Activated B cell treated with CpG ODN at 0.5 μM for 24 hours (primary cell): ENCODE measurements at regions of chr2 and their contacts with region 1.

Region 1: DNA sequence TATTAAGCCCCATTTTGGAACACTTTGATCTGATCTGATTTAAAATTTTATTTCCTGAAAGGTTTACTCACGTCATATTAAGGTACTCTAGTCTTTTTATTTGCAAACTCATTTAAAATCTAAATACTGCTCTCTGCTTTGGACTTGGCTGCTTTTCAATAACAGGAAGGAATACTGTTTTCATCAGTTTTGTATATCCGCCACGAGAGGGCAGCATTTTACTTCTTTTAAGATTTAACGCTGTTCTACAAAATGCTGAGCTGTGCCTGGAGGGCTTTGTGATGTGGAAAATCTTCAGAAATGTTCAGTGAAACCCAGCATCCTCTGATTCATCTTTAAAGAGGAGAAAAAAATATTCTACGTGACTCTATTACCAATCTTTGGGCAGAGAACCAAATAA is 37.5 kb upstream of the SLC38A11 start:
- DNase-seq: no peak
- ATAC-seq: peak; percentile 58
- H3K4me3 Mint-ChIP-seq: no peak overlapping the region
- H3K27ac Mint-ChIP-seq: peak overlapping the region; percentile 83
- H3K4me1 Mint-ChIP-seq: peaks cover 46% of the 10 kb centered on the region
- H3K27me3 Mint-ChIP-seq: no peaks in the 10 kb centered on the region
- CTCF ChIP-seq: no peak

Region 2: DNA sequence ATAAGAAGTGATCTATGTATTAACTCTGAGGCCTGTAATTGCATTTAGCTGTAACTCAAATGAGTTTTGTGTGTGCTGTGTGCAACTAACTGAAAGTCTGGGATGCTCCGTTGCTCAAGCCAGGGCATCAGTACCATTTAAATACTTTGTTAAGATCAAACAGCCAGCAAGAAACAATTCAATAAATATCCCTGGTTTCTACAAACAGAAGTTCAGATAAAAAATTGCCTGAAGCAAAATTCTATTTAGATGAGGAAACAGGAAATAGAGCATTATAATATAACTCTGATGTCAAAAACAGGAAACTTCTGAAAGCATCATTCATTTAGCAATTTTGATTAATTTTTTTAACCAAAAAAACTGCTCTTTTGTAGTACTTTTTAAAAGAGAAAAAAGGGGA is 18.6 kb before region 1 on chr2:
- CTCF ChIA-PET with region 1: interaction called, 7 read pairs
- POLR2A ChIA-PET with region 1: no interaction called
- intact Hi-C with region 1: loop called (anchors 1 kb)
- DNase-seq: no peak
- ATAC-seq: no peak
- H3K4me3 Mint-ChIP-seq: peak overlapping the region; percentile 32
- H3K27ac Mint-ChIP-seq: peak overlapping the region; percentile 57
- H3K4me1 Mint-ChIP-seq: peaks cover 85% of the 10 kb centered on the region
- H3K27me3 Mint-ChIP-seq: no peaks in the 10 kb centered on the region
- CTCF ChIP-seq: no peak

Region 3: GRCh38 chr2:165032559-165032958 is 39.7 kb after region 1 on chr2:
- CTCF ChIA-PET with region 1: no interaction called
- POLR2A ChIA-PET with region 1: no interaction called
- intact Hi-C with region 1: no loop called
- DNase-seq: no peak
- ATAC-seq: no peak
- H3K4me3 Mint-ChIP-seq: no peak overlapping the region
- H3K27ac Mint-ChIP-seq: no peak overlapping the region
- H3K4me1 Mint-ChIP-seq: no peaks in the 10 kb centered on the region
- H3K27me3 Mint-ChIP-seq: peaks cover 2% of the 10 kb centered on the region
- CTCF ChIP-seq: no peak

Region 4: GRCh38 chr2:165203689-165204559 is 211.1 kb after region 1 on chr2 and contains the start of gene SCN3A:
- CTCF ChIA-PET with region 1: interaction called, 25 read pairs
- POLR2A ChIA-PET with region 1: interaction called, 6 read pairs
- intact Hi-C with region 1: loop called (anchors 1 kb)
- DNase-seq: no peak
- ATAC-seq: peak; percentile 57
- H3K4me3 Mint-ChIP-seq: peak within 1 kb of the TSS; percentile 80
- H3K27ac Mint-ChIP-seq: peak within 1 kb of the TSS; percentile 73
- H3K4me1 Mint-ChIP-seq: peaks cover 29% of the 10 kb centered on the region
- H3K27me3 Mint-ChIP-seq: no peaks in the 10 kb centered on the region
- CTCF ChIP-seq: no peak
- total RNA-seq, gene SCN3A: 2.2 and 2.6 TPM in 2 replicates

Region 5: DNA sequence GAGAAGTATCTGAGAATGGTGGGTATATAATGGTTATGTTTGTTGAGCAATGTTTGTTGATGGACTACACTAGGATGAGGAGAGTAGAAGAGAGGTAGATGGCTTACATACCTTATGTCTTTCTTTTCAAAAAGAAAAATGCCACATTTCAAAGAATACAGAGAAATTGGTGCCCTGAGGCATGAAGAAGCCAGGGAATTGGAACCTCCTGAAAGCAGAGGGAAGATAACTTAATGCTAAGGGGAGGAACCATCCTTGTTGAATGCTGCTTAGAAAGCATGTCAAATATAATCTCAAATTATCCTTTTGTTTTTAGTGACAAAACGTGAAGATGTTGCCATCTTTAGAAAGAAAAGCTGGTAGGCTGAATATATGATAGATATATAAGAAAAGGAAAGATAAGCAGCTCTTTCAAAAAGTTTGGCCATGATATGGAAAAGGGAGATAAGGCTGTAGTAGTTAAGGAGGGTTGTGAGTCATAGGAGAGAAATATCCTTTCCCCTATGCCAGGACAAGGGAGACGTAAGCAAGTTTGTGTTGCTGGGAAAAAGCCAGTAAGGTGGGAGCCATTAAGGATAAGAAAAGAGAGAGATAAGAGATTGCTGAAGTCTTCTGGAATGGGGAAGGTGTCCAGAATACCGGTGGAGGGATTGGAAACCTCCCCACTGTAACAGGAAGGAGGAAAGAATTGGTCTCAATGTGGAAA is 312.7 kb after region 1 on chr2:
- CTCF ChIA-PET with region 1: no interaction called
- POLR2A ChIA-PET with region 1: no interaction called
- intact Hi-C with region 1: loop called (anchors 5 kb)
- DNase-seq: no peak
- ATAC-seq: no peak
- H3K4me3 Mint-ChIP-seq: no peak overlapping the region
- H3K27ac Mint-ChIP-seq: no peak overlapping the region
- H3K4me1 Mint-ChIP-seq: no peaks in the 10 kb centered on the region
- H3K27me3 Mint-ChIP-seq: no peaks in the 10 kb centered on the region
- CTCF ChIP-seq: no peak

Region 6: GRCh38 chr2:165874445-165875039 is 881.7 kb after region 1 on chr2:
- CTCF ChIA-PET with region 1: interaction called, 7 read pairs
- POLR2A ChIA-PET with region 1: no interaction called
- intact Hi-C with region 1: loop called (anchors 2 kb)
- DNase-seq: no peak
- ATAC-seq: peak; percentile 95
- H3K4me3 Mint-ChIP-seq: no peak overlapping the region
- H3K27ac Mint-ChIP-seq: no peak overlapping the region
- H3K4me1 Mint-ChIP-seq: peaks cover 7% of the 10 kb centered on the region
- H3K27me3 Mint-ChIP-seq: no peaks in the 10 kb centered on the region
- CTCF ChIP-seq: no peak

Region 7: DNA sequence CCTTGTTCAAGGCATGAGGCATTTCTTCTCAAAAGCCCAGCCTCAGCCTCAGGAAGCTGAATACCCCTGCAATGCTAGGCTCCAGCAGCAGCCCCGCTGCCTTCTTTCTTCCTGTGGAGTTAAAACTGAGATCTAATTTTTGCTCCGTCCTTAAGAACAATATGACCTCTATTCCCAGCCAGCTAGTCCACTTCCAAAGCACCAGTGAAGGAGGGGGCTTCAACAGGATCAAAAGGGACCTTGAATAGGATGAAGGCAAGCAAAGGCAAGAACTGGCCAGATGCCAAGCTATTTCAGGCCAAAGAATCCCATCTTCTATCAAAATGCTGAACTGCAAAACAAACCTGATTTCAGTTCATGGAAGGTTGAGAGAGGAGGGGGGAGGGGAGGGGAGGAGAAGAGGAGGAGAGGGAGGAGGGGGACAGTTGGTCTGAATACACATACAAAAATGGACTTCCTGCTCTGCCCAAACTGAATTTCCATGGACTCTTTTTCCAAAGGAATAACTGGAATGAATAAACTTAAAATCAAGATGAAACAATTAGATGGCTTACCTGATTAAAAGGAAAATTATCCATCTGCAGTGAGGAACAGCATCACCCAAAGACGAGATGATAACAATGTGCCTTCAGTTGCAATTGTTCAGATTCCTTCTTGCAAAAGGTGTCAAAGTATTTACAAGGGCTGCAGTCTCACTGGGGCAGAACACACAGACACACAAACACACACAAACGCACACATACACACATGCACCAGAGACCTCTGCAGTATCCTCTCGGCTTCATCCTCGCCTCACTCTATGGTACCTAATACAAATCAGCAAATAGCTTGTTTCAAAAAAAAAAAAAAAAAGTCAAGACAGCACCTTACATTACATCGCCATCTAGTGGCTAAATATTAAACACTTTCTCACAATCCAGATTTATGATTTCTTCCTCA is 1134.7 kb after region 1 on chr2 and contains the start of gene SCN1A:
- CTCF ChIA-PET with region 1: interaction called, 3 read pairs
- POLR2A ChIA-PET with region 1: no interaction called
- intact Hi-C with region 1: loop called (anchors 2 kb)
- DNase-seq: no peak
- ATAC-seq: no peak
- H3K4me3 Mint-ChIP-seq: no peak within 1 kb of the TSS
- H3K27ac Mint-ChIP-seq: no peak within 1 kb of the TSS
- H3K4me1 Mint-ChIP-seq: peaks cover 2% of the 10 kb centered on the region
- H3K27me3 Mint-ChIP-seq: peaks cover 13% of the 10 kb centered on the region
- CTCF ChIP-seq: no peak
- total RNA-seq, gene SCN1A: not detected in 2 replicates